Breast epithelium (tissue), 4 donors: ENCODE measurements at regions of chr3 and their contacts with region 1.

Region 1: GRCh38 chr3:135989242-135989641 is 23.7 kb downstream of the PPP2R3A start:
- DNase-seq: no peak
- H3K4me3 ChIP-seq: no peak overlapping the region
- H3K27ac ChIP-seq: no peak overlapping the region
- H3K4me1 ChIP-seq: no peaks in the 10 kb centered on the region
- H3K27me3 ChIP-seq: no peaks in the 10 kb centered on the region
- CTCF ChIP-seq: no peak
- POLR2A ChIP-seq: no peak

Region 2: DNA sequence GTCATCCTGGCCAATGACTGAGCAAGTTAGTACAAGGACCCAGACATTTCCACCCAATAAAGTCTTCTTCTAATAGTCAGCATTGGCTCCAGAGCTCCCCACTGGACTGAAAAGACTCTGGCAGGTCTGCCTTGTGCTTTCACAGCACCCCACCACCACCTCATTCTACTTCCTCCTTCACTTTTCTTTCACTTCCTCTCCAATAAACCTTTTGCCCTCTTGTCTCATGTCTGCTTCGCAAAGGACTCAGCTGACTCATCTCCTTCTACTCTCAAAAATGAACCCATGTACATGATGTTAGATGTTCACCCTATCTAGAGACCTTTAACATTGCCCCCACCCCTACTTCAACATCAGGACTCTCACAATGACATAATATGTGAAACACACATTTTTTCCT is 204.7 kb before region 1 on chr3:
- intact Hi-C with region 1: no loop called
- DNase-seq: no peak
- H3K4me3 ChIP-seq: no peak overlapping the region
- H3K27ac ChIP-seq: no peak overlapping the region
- H3K4me1 ChIP-seq: no peaks in the 10 kb centered on the region
- H3K27me3 ChIP-seq: no peaks in the 10 kb centered on the region
- CTCF ChIP-seq: no peak
- POLR2A ChIP-seq: no peak

Region 3: DNA sequence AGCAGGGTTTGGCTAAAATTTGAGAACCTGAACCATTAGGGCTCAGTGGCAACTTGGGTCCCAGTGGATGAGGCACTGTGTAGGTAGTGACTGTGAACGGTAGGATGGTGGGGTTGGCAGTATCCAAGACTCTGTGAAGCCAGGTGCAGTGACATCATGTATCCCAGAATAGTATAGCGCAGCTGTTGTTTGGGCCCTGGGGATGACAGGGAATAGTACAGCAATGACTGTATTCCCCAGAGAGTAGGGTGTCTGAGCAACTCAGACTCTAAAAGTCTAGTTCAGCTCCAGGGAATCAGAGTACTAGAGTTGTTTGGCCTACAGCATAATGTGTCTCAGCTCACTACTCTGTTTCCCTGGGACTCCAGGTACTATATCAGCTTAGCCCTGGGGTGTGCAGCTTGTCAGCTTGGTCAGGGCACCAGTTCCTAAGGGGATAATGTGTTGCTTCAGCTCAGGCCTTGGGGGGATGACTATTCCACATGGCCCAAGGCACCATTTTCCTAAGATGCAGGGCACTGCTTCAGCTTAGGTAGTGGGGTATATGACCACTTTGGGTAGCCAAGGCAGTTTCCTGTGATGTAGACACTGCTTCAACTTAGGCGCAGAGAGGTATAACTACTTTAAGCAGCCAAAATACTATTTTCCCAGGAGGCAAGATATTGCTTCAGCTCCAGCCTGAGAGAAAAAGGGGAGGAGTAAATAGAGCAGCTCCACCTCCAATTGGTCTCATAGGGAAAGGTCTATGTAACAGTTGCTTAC is 44.2 kb before region 1 on chr3:
- intact Hi-C with region 1: loop called (anchors 2 kb)
- DNase-seq: no peak
- H3K4me3 ChIP-seq: no peak overlapping the region
- H3K27ac ChIP-seq: no peak overlapping the region
- H3K4me1 ChIP-seq: no peaks in the 10 kb centered on the region
- H3K27me3 ChIP-seq: no peaks in the 10 kb centered on the region
- CTCF ChIP-seq: no peak
- POLR2A ChIP-seq: no peak

Region 4: GRCh38 chr3:136018876-136019275 is 29.6 kb after region 1 on chr3:
- intact Hi-C with region 1: no loop called
- DNase-seq: no peak
- H3K4me3 ChIP-seq: no peak overlapping the region
- H3K27ac ChIP-seq: no peak overlapping the region
- H3K4me1 ChIP-seq: no peaks in the 10 kb centered on the region
- H3K27me3 ChIP-seq: no peaks in the 10 kb centered on the region
- CTCF ChIP-seq: no peak
- POLR2A ChIP-seq: no peak

Region 5: GRCh38 chr3:136283627-136284026 is 294.4 kb after region 1 on chr3:
- intact Hi-C with region 1: no loop called
- DNase-seq: no peak
- H3K4me3 ChIP-seq: no peak overlapping the region
- H3K27ac ChIP-seq: no peak overlapping the region
- H3K4me1 ChIP-seq: no peaks in the 10 kb centered on the region
- H3K27me3 ChIP-seq: no peaks in the 10 kb centered on the region
- CTCF ChIP-seq: no peak
- POLR2A ChIP-seq: no peak